ENCODE measurements at regions of chr18 and their contacts with region 1.

Region 1: GRCh38 chr18:50649821-50650220 is 89.9 kb downstream of the MAPK4 start:
- DNase-seq: peak; percentile 82 to 89
- ATAC-seq: peak; percentile 87
- H3K4me3 ChIP-seq: no peak overlapping the region
- H3K27ac ChIP-seq: peak overlapping the region; percentile 10 to 80
- H3K4me1 ChIP-seq: no peaks in the 10 kb centered on the region
- H3K27me3 ChIP-seq: no peaks in the 10 kb centered on the region

Region 2: DNA sequence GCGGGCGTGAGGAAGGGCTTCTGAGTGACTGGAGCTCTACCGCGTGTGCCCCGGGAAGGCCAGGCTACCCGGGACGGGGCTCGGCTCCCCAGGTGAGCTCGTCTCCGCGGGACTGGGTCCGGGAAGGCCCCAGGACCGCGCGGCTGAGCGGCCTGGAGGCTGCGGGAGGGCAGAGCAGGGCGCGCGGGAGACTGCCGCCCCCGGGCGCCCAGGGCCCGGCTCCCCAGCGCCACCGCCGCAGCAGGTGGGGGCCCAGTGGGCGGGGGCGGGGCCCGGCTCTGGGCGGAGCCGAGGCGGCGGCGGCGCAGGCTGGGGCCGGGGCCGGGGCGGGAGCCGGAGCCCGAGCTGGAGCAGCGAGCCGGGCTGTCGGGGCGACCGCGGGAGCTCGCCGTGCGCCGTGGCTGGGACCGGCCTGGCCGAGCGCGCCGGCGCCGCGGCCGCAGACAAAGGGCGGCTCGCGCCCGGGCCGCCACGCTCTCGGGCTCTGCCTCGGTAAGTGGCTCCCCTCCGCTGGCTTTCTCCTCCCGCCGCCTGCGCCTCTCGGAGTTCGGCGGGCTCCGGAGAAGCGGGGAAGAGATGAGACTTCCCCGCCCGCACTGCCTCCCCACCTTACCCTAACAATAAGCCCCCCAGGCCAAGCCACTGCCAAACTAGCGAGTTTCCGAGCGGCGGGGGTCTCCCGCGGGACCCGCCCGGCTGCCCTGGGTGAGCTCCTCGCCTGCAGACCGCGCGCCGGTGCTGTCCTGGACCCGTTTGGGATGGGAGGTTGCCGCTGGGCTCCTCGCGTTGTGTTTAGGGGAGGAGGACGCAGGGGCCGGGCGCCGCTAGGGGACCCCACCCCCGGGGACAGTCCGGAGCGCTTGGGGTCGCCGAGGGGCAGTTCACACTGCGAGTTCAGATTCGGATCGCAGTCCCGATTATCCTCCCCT is 89.8 kb before region 1 on chr18 and contains the start of gene MAPK4:
- intact Hi-C with region 1: loop called in 1 of 2 experiments (anchors 5 kb)
- DNase-seq: peak in 1 of 2 donors; percentile 83
- ATAC-seq: peak; percentile 89
- H3K4me3 ChIP-seq: peak within 1 kb of the TSS; percentile 31 to 90
- H3K27ac ChIP-seq: peak within 1 kb of the TSS; percentile 3 to 52
- H3K4me1 ChIP-seq: no peaks in the 10 kb centered on the region
- H3K27me3 ChIP-seq: no peaks in the 10 kb centered on the region
- total RNA-seq, gene MAPK4: 1.7 to 4.2 TPM

Region 3: GRCh38 chr18:50614838-50615237 is 35.0 kb before region 1 on chr18:
- intact Hi-C with region 1: loop called in 1 of 2 experiments (anchors 5 kb)
- DNase-seq: no peak
- ATAC-seq: peak; percentile 49
- H3K4me3 ChIP-seq: no peak overlapping the region
- H3K27ac ChIP-seq: no peak overlapping the region
- H3K4me1 ChIP-seq: no peaks in the 10 kb centered on the region
- H3K27me3 ChIP-seq: no peaks in the 10 kb centered on the region

Measured in aorta (tissue), 5 donors.